AG04450 (cell line): ENCODE measurements at regions of chr14 and their contacts with region 1.

Region 1: DNA sequence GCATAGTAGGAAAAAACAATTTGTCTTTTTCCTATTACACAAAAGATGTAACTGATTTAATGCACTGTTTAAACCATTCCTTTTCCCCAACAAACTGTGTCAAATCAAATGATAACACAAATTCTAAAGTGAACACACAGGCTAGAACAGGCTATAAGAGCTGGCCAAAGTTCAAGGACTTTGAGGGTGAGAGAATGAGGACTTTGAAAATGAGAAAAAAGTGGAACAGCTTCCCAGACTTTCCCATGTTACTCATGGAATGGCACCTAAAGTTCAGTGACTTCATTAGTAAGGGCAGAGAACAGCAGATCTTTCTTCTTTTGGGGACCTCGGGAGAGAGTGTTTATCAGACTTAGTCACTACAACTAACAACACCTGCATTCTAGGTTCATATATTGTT is 22.6 kb downstream of the TMEM253 start:
- DNase-seq: no peak
- H3K4me3 ChIP-seq: no peak overlapping the region
- H3K27ac ChIP-seq: no peak overlapping the region
- H3K27me3 ChIP-seq: peaks cover 10% of the 10 kb centered on the region
- CTCF ChIP-seq: no peak

Region 2: DNA sequence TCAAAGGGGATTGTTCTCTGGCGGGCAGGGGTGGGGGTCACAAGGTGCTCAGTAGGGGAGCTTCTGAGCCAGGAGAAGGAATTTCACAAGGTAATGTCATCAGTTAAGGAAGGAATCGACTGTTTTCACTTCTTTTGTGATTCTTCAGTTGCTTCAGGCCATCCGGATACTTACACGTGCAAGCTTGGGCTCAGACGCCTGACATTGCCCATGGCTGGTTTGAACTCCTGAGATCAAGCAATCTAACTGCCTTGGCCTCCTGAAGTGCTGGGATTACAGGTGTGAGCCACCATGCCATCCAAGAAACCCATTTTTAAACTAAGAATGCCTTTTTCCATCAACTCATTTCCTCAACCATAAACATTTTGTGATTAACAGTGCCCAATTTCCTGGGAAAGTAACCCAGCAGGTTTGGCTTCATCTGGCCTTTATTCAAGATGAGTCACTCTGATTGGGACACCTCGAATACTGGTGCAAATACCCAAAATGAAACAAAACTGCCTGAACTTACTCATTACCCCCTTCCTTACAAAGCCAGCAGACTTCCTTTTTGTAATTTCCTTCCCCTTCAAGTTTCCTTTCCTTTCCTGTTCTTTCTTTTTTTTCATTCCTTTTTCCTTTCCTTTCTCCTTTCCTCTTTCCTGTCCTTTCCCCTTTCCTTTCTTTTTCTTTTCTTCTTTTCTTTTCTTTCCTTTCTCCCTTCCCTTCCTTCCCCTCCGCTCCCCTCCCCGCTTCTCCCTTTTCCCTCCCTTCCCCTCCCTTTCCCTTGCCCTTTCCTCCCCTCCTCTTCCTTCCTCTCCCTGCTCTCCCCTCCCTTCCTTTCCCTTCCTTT is 628.3 kb before region 1 on chr14:
- CTCF ChIA-PET with region 1: no interaction called
- POLR2A ChIA-PET with region 1: no interaction called
- DNase-seq: no peak
- H3K4me3 ChIP-seq: no peak overlapping the region
- H3K27ac ChIP-seq: no peak overlapping the region
- H3K27me3 ChIP-seq: no peaks in the 10 kb centered on the region
- CTCF ChIP-seq: no peak

Region 3: GRCh38 chr14:21136024-21136423 is 12.6 kb after region 1 on chr14:
- CTCF ChIA-PET with region 1: interaction called, 27 read pairs
- POLR2A ChIA-PET with region 1: no interaction called
- DNase-seq: no peak
- H3K4me3 ChIP-seq: no peak overlapping the region
- H3K27ac ChIP-seq: no peak overlapping the region
- H3K27me3 ChIP-seq: peaks cover 2% of the 10 kb centered on the region
- CTCF ChIP-seq: peak; percentile 74